CD4-positive, alpha-beta memory T cell (primary cell): ENCODE measurements at regions of chr12 and their contacts with region 1.

Region 1: DNA sequence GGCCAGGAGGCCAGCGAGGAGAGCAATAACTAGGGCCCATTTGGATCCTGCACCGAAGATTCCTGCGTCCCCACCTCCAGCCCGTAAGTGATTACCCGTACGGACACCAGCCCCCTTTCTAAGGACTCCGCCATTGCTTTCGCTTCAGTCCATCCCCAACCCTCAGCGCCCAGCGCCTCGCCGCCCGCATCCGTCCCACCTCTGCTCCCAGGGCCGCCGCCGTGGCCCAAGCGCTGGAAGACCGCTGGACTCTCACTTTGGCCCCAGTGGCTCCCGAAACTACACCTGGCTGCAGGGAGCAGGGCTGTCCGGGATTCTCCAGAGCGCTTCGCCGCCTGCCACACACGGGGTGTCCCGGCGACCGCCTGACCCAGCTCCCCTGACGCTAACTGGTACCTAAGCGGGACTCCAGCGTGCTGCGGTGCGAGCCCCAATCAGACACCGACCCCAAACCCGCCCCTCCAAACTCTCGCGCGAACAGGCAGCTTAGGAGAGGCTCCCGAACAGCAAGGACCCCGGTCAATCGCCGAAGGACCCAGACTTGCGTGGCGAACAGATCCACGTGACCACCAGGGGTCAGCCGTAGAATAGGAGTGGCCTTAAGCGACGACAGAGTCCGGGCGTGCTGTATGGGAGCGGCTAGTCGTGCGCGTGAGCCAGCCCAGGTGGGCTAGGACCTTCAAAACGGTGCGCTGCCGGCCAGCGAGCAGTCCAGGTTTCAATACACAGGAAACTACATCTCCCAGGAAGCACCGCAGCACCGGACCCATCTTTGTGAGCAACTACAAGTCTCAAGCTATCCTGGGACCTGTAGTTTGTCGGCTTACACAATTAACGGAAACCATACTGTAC is at the start of gene CNPY2:
- DNase-seq: peak; percentile 93 to 97 (median 95)
- H3K4me3 ChIP-seq: peak within 1 kb of the TSS; percentile 99 to 100
- H3K4me3 Mint-ChIP-seq: peak within 1 kb of the TSS; percentile 97 to 100 (median 98)
- H3K27ac ChIP-seq: peak within 1 kb of the TSS; percentile 95
- H3K27ac Mint-ChIP-seq: peak within 1 kb of the TSS; percentile 98 to 100 (median 99)
- H3K4me1 ChIP-seq: peaks cover 18% of the 10 kb centered on the region
- H3K4me1 Mint-ChIP-seq: peaks cover 1 to 25% (median 13%) of the 10 kb centered on the region in 4 donors
- H3K27me3 ChIP-seq: no peaks in the 10 kb centered on the region
- H3K27me3 Mint-ChIP-seq: no peaks in the 10 kb centered on the region
- total RNA-seq, gene CNPY2: 93.5 to 95.8 TPM

Region 2: DNA sequence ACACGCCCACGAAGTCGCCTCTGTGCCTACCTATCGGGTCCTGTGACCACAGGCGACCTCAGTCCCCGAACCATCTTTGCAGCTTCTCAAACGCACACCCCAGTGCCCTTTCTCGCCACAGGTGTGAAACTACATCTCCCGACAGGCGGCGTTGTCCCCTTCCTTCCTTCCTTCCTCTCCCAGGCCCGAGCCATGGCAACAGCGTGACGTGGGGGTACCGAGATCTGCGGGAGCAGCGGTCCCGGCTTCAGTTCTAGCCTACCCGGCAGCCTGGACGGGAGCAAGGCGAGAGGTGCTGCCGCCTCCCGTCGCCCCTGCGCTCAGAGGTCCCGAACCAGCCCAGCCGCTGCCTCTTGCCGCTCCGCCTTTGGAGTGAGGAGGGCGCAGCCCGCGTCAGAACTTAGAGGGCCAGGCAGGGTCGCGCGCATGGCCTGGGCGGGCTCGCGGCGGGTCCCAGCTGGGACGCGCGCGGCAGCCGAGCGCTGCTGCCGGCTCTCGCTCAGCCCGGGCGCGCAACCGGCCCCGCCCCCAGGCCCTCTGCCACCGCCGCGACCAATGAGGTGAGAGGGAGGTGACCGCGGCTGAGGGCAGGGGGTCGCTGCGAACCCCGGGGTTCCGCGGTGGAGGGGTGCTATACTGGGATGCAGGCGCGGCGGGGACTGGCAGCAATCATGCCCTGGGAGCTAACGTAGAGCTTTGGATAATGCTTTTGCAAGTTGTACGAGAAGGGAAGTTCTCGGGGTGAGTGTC is 49.0 kb before region 1 on chr12 and contains the start of gene COQ10A:
- CTCF ChIA-PET with region 1: no interaction called
- POLR2A ChIA-PET with region 1: interaction called, 14 read pairs
- intact Hi-C with region 1: no loop called
- DNase-seq: peak; percentile 89 to 96 (median 91)
- H3K4me3 ChIP-seq: peak within 1 kb of the TSS; percentile 27 to 90
- H3K4me3 Mint-ChIP-seq: peak within 1 kb of the TSS; percentile 89 to 99 (median 96)
- H3K27ac ChIP-seq: peak within 1 kb of the TSS; percentile 84
- H3K27ac Mint-ChIP-seq: peak within 1 kb of the TSS; percentile 90 to 99 (median 97)
- H3K4me1 ChIP-seq: peaks cover 14% of the 10 kb centered on the region
- H3K4me1 Mint-ChIP-seq: peaks cover 10 to 23% (median 16%) of the 10 kb centered on the region in 4 donors
- H3K27me3 ChIP-seq: no peaks in the 10 kb centered on the region
- H3K27me3 Mint-ChIP-seq: no peaks in the 10 kb centered on the region
- total RNA-seq, gene COQ10A: 35.3 to 38.6 TPM

Region 3: DNA sequence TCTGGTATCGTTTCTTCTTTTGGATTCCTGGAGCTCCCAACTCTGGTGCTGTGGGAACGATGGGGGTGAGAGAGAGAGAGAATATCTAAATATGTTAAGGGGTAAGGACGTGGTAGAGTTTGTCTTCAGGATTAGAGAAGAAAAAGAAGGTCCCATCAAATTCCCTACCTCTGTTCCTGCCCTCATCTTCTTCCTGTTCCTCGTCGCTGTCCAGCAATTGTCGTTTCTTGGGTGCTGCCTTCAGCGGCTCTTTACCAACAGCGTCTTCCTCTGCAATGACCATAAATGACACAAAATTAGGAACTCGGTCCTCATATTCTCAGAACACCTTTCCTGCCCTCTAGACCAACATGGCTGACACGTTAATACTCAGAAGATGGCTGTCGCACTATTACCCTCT is 101.9 kb after region 1 on chr12:
- CTCF ChIA-PET with region 1: no interaction called
- POLR2A ChIA-PET with region 1: no interaction called
- intact Hi-C with region 1: no loop called
- DNase-seq: no peak
- H3K4me3 ChIP-seq: no peak overlapping the region
- H3K4me3 Mint-ChIP-seq: no peak overlapping the region
- H3K27ac ChIP-seq: no peak overlapping the region
- H3K27ac Mint-ChIP-seq: no peak overlapping the region
- H3K4me1 ChIP-seq: no peaks in the 10 kb centered on the region
- H3K4me1 Mint-ChIP-seq: peaks cover 0 to 1% (median 0%) of the 10 kb centered on the region in 4 donors
- H3K27me3 ChIP-seq: no peaks in the 10 kb centered on the region
- H3K27me3 Mint-ChIP-seq: no peaks in the 10 kb centered on the region